ENCODE measurements at regions of chr3 and their contacts with region 1.

Region 1: GRCh38 chr3:49929331-49930240 is at the start of gene MON1A:
- DNase-seq: peak; percentile 82 to 95 (median 84)
- ATAC-seq: peak; percentile 94
- H3K4me3 ChIP-seq: peak within 1 kb of the TSS; percentile 62
- H3K27ac ChIP-seq: peak within 1 kb of the TSS; percentile 95
- H3K4me1 ChIP-seq: peaks cover 22 to 31% of the 10 kb centered on the region in 2 experiments
- H3K27me3 ChIP-seq: no peaks in the 10 kb centered on the region
- CTCF ChIP-seq: peak; percentile 20 to 34 (median 29); a peak in 4 of 6 replicates
- EP300 ChIP-seq: 0 out of 2 replicates have a peak, but pooled peaks have one; percentile 10
- POLR2A ChIP-seq: peak; percentile 74
- RAD21 ChIP-seq: no peak
- polyA plus RNA-seq, gene MON1A: 1.1 to 1.5 TPM

Region 2: GRCh38 chr3:49939858-49940666 is 10.5 kb after region 1 on chr3 and contains the start of gene RBM6:
- CTCF ChIA-PET with region 1: no interaction called
- POLR2A ChIA-PET with region 1: interaction called, 38 read pairs
- in situ Hi-C with region 1: no loop called
- intact Hi-C with region 1: no loop called
- DNase-seq: peak; percentile 87 to 96 (median 92)
- ATAC-seq: peak; percentile 99
- H3K4me3 ChIP-seq: peak within 1 kb of the TSS; percentile 87
- H3K27ac ChIP-seq: peak within 1 kb of the TSS; percentile 96
- H3K4me1 ChIP-seq: peaks cover 4 to 9% of the 10 kb centered on the region in 2 experiments; a peak in 3 of 5 replicates
- H3K27me3 ChIP-seq: no peaks in the 10 kb centered on the region
- CTCF ChIP-seq: no peak
- EP300 ChIP-seq: no peak
- POLR2A ChIP-seq: peak; percentile 97
- RAD21 ChIP-seq: no peak
- polyA plus RNA-seq, gene RBM6: 19.9 to 36.9 TPM

Region 3: GRCh38 chr3:49952924-49953323 is 23.3 kb after region 1 on chr3:
- CTCF ChIA-PET with region 1: no interaction called
- POLR2A ChIA-PET with region 1: interaction called, 10 read pairs
- in situ Hi-C with region 1: no loop called
- intact Hi-C with region 1: no loop called
- DNase-seq: no peak
- ATAC-seq: no peak
- H3K4me3 ChIP-seq: no peak overlapping the region
- H3K27ac ChIP-seq: no peak overlapping the region
- H3K4me1 ChIP-seq: peaks cover 3 to 9% of the 10 kb centered on the region in 2 experiments; a peak in 3 of 5 replicates
- H3K27me3 ChIP-seq: no peaks in the 10 kb centered on the region
- CTCF ChIP-seq: no peak
- EP300 ChIP-seq: no peak
- POLR2A ChIP-seq: no peak
- RAD21 ChIP-seq: no peak

Region 4: GRCh38 chr3:50474717-50475116 is 545.1 kb after region 1 on chr3:
- CTCF ChIA-PET with region 1: no interaction called
- POLR2A ChIA-PET with region 1: no interaction called
- in situ Hi-C with region 1: no loop called
- intact Hi-C with region 1: no loop called
- DNase-seq: no peak
- ATAC-seq: no peak
- H3K4me3 ChIP-seq: no peak overlapping the region
- H3K27ac ChIP-seq: no peak overlapping the region
- H3K4me1 ChIP-seq: no peaks in the 10 kb centered on the region; a peak in 1 of 5 replicates
- H3K27me3 ChIP-seq: peaks cover 4 to 52% of the 10 kb centered on the region in 2 experiments; a peak in 3 of 5 replicates
- CTCF ChIP-seq: no peak
- EP300 ChIP-seq: no peak
- POLR2A ChIP-seq: no peak
- RAD21 ChIP-seq: no peak